ENCODE measurements at regions of chr14 and their contacts with region 1.

Region 1: GRCh38 chr14:103594265-103594664 is 31.5 kb downstream of the COA8 start:
- DNase-seq: peak; percentile 76
- H3K4me3 ChIP-seq: no peak overlapping the region
- CTCF ChIP-seq: no peak

Region 2: DNA sequence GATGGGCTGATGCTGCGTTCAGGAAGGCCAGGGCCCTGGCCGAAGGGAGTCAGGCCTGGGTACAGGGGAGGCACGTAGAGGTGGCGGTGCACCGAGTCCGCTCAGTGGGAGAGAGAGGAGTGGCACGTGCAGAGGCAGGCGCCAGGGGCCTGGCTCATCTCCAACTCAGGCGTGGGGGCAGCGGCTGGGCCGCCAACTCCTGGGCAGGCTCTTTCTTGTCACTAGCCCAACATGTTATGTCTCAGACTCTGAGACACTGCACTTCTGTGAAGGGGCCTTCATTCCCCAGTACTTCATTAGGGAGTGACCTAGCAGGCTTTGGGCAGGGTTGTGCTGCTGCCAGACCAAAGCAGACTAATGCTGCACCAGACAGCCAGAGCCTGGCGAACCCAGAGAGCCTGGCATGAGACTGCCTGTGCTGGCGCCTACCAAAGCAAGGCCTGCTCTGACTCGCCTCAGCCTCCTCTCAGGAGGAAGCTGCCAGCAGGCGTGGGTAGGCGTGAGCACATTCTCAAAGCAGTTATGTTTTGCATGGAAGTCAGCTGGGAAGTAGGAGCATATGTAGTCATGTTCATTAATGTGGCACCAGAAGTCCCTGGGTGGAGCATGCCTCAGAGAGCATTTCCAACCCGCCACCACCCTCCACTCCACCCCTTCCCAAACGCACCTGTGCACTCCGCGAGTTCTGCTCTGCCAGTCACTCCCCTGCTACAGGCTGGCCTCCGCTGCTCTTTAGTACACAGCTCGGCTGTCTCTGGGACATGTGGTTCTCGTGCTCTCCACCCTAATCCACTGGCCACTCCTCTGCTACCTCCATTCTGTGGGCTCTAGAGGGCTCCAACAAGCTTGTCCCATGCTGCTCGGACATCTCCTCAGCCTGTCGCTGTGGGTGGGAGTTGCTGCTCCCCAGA is 81.3 kb before region 1 on chr14:
- in situ Hi-C with region 1: loop called (anchors 5 kb)
- DNase-seq: peak; percentile 19
- H3K4me3 ChIP-seq: no peak overlapping the region
- CTCF ChIP-seq: no peak

Region 3: DNA sequence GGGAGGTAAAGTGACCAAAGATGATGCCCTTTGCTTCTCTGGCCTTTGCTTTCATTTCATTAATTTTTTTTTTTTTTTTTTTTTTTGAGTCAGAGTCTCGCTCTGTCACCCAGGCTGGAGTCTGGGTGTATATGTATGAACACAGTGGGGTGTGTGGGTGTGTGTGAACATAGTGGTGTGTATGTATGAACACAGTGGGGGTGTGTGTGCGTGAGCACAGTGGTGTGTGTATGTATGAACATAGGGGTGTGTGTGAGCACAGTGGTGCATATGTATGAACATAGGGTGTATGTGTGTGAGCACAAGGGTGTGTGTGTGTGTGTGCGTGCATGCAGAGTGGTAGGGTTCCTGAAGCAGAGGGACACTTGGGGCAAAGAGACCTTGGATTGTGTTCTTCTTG is 44.3 kb after region 1 on chr14:
- in situ Hi-C with region 1: loop called (anchors 5 kb)
- DNase-seq: no peak
- H3K4me3 ChIP-seq: no peak overlapping the region
- CTCF ChIP-seq: no peak

Region 4: GRCh38 chr14:103663506-103663905 is 69.2 kb after region 1 on chr14:
- in situ Hi-C with region 1: no loop called
- DNase-seq: no peak
- H3K4me3 ChIP-seq: no peak overlapping the region
- CTCF ChIP-seq: no peak

Region 5: GRCh38 chr14:103679351-103679750 is 85.1 kb after region 1 on chr14:
- in situ Hi-C with region 1: loop called (anchors 5 kb)
- DNase-seq: no peak
- H3K4me3 ChIP-seq: no peak overlapping the region
- CTCF ChIP-seq: peak; percentile 47